Heart right ventricle (tissue), 16 donors: ENCODE measurements at regions of chr6 and their contacts with region 1.

Region 1: DNA sequence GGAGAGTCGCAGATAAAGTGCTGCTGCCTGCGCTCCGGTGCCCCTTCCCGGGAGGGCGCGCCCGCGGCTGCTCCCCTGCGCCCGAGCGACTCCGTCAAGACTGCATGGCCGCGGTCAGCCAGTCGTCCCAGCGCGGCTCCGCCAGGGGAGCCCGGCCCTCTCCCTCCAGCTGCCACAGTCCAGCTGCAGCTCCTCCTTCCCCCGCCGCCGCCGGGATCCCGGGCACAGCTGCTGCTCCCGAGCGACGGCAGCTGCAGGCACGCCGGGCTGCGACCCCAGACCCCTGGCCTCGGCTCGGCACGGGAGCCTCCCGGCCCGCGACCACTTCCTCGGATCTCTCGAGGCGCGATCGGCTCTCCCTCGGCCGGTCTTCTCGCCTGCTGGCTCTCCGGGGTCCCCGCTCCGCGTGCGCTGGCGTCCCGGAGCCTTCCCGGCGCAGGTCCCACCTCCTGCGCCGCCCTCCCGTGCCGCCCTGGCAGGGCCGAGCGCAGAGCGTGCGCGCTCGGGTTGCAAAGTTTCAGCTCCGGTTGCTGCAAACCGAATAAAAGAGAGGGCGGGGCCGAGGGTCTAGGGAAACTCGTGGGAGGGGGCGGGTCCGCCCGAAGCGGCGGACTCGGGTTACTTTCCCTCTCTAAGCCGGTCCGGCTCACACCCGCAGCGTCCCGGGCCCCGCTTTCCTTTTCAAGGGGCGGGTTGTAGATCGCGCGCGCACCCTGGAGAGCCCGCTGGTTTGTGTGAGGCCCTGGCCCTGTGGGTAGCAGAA is at the start of gene CNKSR3:
- DNase-seq: peak; percentile 84 to 89
- ATAC-seq: peak; percentile 88 to 95 (median 92)
- H3K4me3 ChIP-seq: peak within 1 kb of the TSS; percentile 64 to 94 (median 84)
- H3K27ac ChIP-seq: peak within 1 kb of the TSS; percentile 78 to 96 (median 92)
- H3K4me1 ChIP-seq: peaks cover 3 to 61% (median 27%) of the 10 kb centered on the region in 9 donors
- H3K27me3 ChIP-seq: peaks cover 0 to 28% (median 0%) of the 10 kb centered on the region in 7 donors
- CTCF ChIP-seq: peak in 4 of 9 donors; percentile 5 to 19 (median 12)
- total RNA-seq, gene CNKSR3: 12.9 to 42.2 (median 27.8) TPM

Region 2: GRCh38 chr6:154432533-154433476 is 77.5 kb before region 1 on chr6:
- intact Hi-C with region 1: loop called in 4 of 10 experiments (anchors 5 to 10 kb)
- DNase-seq: peak in 1 of 2 donors; percentile 34
- ATAC-seq: peak; percentile 31 to 83 (median 79)
- H3K4me3 ChIP-seq: no peak overlapping the region
- H3K27ac ChIP-seq: peak overlapping the region in 7 of 10 donors; percentile 8 to 68 (median 33)
- H3K4me1 ChIP-seq: peaks cover 8 to 58% (median 35%) of the 10 kb centered on the region in 9 donors
- H3K27me3 ChIP-seq: no peaks in the 10 kb centered on the region
- CTCF ChIP-seq: no peak

Region 3: DNA sequence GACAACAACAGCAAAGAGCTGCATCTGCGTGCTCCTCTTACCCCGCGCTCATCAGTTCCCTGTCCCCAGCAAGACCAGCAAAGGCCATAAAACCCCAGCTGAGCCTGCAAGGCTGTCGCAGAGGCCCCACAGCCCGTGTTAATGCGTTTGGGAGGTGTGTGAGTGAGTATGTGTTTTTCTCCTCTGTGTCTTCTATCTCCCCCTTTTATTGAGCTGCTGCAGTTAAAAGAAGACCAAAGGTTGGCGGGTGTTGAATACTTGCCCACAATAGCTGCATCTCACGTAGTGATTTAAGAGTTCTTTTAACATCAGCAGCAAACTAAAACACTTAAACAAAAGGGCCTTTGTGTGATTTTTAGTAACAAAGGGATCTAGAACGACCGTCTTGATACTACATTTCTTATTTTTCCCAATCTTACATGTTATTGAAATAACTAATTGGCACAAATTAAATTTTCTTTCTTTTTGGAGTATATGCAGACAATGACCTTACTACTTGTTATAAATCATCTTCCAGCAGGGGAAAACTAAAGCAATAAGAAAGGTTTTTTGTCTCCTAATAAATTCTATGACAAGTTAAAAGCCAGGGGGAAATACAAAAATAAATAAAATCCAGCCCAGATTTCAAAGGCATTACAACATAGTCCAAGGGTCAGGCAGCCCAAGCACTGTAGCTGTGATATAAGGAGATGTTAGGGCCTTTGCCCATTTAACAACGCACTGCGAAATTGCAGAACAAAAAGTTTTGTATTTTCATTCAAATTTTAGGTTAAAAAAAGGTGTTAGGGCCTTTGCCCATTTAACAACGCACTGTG is 27.4 kb after region 1 on chr6:
- intact Hi-C with region 1: no loop called
- DNase-seq: no peak
- ATAC-seq: no peak
- H3K4me3 ChIP-seq: no peak overlapping the region
- H3K27ac ChIP-seq: no peak overlapping the region
- H3K4me1 ChIP-seq: no peaks in the 10 kb centered on the region
- H3K27me3 ChIP-seq: no peaks in the 10 kb centered on the region
- CTCF ChIP-seq: no peak

Region 4: GRCh38 chr6:154580401-154581135 is 70.2 kb after region 1 on chr6:
- intact Hi-C with region 1: loop called in 1 of 10 experiments (anchors 10 kb)
- DNase-seq: no peak
- ATAC-seq: no peak
- H3K4me3 ChIP-seq: no peak overlapping the region
- H3K27ac ChIP-seq: no peak overlapping the region
- H3K4me1 ChIP-seq: no peaks in the 10 kb centered on the region
- H3K27me3 ChIP-seq: no peaks in the 10 kb centered on the region
- CTCF ChIP-seq: no peak

Region 5: DNA sequence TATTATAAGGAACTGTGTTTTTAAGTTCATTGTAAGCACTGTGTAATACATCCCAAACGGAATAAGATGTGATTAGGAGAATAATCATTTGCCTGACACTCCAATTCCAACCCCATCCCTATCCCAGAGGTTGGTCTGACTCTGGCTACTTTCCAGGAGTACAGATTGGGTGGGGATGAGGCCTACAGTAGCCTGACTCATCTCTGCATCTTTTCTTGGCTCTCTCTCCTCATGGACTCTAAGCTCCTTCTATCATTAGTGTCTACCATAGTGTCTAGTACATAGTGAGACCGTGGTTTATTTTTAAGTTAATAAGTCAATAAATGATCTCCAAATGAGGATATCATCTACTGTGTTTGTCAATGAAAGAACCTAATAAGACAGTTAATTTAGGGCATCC is 92.4 kb after region 1 on chr6:
- intact Hi-C with region 1: loop called in 3 of 10 experiments (anchors 5 to 10 kb)
- DNase-seq: no peak
- ATAC-seq: no peak
- H3K4me3 ChIP-seq: no peak overlapping the region
- H3K27ac ChIP-seq: no peak overlapping the region
- H3K4me1 ChIP-seq: peaks cover 0 to 3% (median 0%) of the 10 kb centered on the region in 9 donors
- H3K27me3 ChIP-seq: no peaks in the 10 kb centered on the region
- CTCF ChIP-seq: no peak

Region 6: DNA sequence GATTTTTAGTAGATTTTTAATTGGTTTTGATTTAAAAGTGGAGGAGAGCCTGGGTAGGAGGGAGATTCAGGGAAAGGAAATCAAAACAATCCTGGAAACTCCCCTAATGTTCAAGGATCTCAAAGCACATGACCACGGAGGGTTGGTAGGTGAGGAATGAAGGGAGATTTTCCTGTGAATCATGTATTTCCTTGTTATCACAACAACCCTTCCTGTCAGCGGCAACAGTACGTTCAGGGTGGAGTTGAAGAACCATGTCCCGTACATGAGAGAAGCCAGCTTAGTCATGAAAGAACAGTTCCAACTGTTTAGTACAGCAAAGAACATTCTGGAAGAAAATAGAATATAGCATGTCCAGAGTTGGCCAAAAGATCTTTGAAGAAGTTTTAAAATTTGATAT is 143.5 kb after region 1 on chr6:
- intact Hi-C with region 1: loop called in 1 of 10 experiments (anchors 5 kb)
- DNase-seq: peak in 1 of 2 donors; percentile 25
- ATAC-seq: peak in 7 of 8 donors; percentile 60 to 89 (median 76)
- H3K4me3 ChIP-seq: no peak overlapping the region
- H3K27ac ChIP-seq: peak overlapping the region in 4 of 10 donors; percentile 27 to 66 (median 43)
- H3K4me1 ChIP-seq: peaks cover 0 to 24% (median 10%) of the 10 kb centered on the region in 9 donors
- H3K27me3 ChIP-seq: no peaks in the 10 kb centered on the region
- CTCF ChIP-seq: no peak

Region 7: GRCh38 chr6:154882107-154882506 is 371.8 kb after region 1 on chr6:
- intact Hi-C with region 1: no loop called
- DNase-seq: no peak
- ATAC-seq: peak in 4 of 8 donors; percentile 17 to 62 (median 50)
- H3K4me3 ChIP-seq: no peak overlapping the region
- H3K27ac ChIP-seq: no peak overlapping the region
- H3K4me1 ChIP-seq: peaks cover 0 to 26% (median 2%) of the 10 kb centered on the region in 9 donors
- H3K27me3 ChIP-seq: no peaks in the 10 kb centered on the region
- CTCF ChIP-seq: no peak